ENCODE measurements at regions of chr1 and their contacts with region 1.

Region 1: DNA sequence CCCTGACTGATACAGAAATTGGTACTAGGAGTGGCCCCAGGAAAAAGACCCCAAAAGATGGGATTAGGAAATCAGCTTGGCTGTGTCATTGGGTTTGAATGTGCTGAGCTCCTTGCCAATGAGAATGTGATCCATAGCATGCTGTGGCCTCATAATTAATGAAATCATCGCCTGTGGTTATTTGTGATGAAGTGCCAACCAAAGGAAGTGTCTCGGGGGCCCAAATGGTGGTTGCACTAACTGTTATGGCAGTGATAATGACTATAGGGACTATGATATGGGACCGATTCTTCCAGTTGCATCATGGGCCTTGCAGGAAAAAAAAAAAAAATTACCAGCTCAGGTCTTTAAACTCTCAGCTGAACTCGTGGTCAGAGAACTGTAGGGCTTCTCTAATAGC is 15.4 kb upstream of the ZDHHC18 start:
- DNase-seq: no peak
- H3K4me3 Mint-ChIP-seq: no peak overlapping the region
- H3K27ac Mint-ChIP-seq: no peak overlapping the region
- H3K4me1 Mint-ChIP-seq: peaks cover 14% of the 10 kb centered on the region
- H3K27me3 Mint-ChIP-seq: no peaks in the 10 kb centered on the region

Region 2: GRCh38 chr1:26799479-26800142 is 11.4 kb before region 1 on chr1:
- CTCF ChIA-PET with region 1: interaction called, 32 read pairs
- intact Hi-C with region 1: no loop called
- DNase-seq: peak; percentile 46
- H3K4me3 Mint-ChIP-seq: no peak overlapping the region
- H3K27ac Mint-ChIP-seq: peak overlapping the region; percentile 64
- H3K4me1 Mint-ChIP-seq: peaks cover 33% of the 10 kb centered on the region
- H3K27me3 Mint-ChIP-seq: no peaks in the 10 kb centered on the region

Region 3: DNA sequence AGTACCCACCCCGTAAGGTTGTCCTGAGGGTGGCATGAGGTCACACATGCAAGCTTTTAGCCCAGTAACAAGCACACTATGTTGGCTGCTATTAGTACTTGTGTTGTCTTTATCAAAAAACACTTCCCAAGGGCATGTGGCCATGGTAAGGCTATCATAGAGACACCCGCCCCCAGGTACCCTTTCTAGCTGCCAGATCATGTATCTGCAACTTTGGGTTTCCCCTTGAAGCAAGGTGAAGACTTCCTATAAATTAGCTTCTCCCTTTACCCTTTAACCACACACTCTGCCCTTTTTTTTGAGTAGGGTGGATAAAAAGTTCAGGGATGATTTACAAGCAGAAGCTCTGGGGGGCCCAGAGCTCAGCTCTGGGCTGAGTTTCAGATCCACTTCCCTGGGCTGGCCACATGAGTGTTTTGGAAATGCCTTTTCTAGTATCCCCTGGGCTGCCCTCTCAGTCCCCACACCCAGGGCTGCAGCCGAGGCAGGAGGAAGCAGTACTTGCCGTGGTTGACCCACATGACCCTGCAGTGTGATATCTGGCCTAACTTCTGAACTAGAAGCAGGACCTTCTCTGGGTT is 17.4 kb after region 1 on chr1:
- CTCF ChIA-PET with region 1: interaction called, 13 read pairs
- intact Hi-C with region 1: loop called (anchors 1 kb)
- DNase-seq: peak; percentile 57
- H3K4me3 Mint-ChIP-seq: peak overlapping the region; percentile 87
- H3K27ac Mint-ChIP-seq: peak overlapping the region; percentile 85
- H3K4me1 Mint-ChIP-seq: peaks cover 66% of the 10 kb centered on the region
- H3K27me3 Mint-ChIP-seq: no peaks in the 10 kb centered on the region

Region 4: GRCh38 chr1:26833432-26834405 is 22.7 kb after region 1 on chr1:
- CTCF ChIA-PET with region 1: interaction called, 13 read pairs
- intact Hi-C with region 1: loop called (anchors 1 kb)
- DNase-seq: peak; percentile 96
- H3K4me3 Mint-ChIP-seq: peak overlapping the region; percentile 57
- H3K27ac Mint-ChIP-seq: peak overlapping the region; percentile 96
- H3K4me1 Mint-ChIP-seq: peaks cover 59% of the 10 kb centered on the region
- H3K27me3 Mint-ChIP-seq: no peaks in the 10 kb centered on the region

Region 5: DNA sequence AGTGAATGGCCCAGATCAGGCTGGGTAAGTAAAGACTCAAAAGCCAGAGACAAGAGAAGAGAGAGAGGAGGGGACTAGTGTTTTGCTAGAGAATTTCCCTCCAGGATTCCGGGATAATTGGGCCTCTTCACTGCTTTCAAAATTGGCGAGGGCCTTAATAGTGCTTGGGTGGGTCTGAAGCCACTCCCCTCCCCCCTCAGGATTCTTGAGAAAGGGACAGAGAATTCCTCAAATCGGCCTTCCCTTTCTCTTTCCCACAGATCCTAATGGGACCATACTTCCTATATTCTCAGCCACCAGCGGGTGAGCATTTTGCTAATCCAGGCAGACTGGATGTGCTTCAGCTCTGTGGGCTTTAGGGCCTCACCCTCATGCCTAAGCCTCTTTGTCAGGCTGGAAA is 63.8 kb after region 1 on chr1:
- CTCF ChIA-PET with region 1: interaction called, 5 read pairs
- intact Hi-C with region 1: loop called (anchors 1 kb)
- DNase-seq: no peak
- H3K4me3 Mint-ChIP-seq: no peak overlapping the region
- H3K27ac Mint-ChIP-seq: no peak overlapping the region
- H3K4me1 Mint-ChIP-seq: peaks cover 2% of the 10 kb centered on the region
- H3K27me3 Mint-ChIP-seq: no peaks in the 10 kb centered on the region

Region 6: GRCh38 chr1:26889551-26890466 is 78.8 kb after region 1 on chr1 and contains the start of gene GPN2:
- CTCF ChIA-PET with region 1: interaction called, 11 read pairs
- intact Hi-C with region 1: no loop called
- DNase-seq: peak; percentile 82
- H3K4me3 Mint-ChIP-seq: peak within 1 kb of the TSS; percentile 94
- H3K27ac Mint-ChIP-seq: peak within 1 kb of the TSS; percentile 91
- H3K4me1 Mint-ChIP-seq: peaks cover 30% of the 10 kb centered on the region
- H3K27me3 Mint-ChIP-seq: no peaks in the 10 kb centered on the region
- total RNA-seq, gene GPN2: 19.8 to 20.7 TPM

Region 7: DNA sequence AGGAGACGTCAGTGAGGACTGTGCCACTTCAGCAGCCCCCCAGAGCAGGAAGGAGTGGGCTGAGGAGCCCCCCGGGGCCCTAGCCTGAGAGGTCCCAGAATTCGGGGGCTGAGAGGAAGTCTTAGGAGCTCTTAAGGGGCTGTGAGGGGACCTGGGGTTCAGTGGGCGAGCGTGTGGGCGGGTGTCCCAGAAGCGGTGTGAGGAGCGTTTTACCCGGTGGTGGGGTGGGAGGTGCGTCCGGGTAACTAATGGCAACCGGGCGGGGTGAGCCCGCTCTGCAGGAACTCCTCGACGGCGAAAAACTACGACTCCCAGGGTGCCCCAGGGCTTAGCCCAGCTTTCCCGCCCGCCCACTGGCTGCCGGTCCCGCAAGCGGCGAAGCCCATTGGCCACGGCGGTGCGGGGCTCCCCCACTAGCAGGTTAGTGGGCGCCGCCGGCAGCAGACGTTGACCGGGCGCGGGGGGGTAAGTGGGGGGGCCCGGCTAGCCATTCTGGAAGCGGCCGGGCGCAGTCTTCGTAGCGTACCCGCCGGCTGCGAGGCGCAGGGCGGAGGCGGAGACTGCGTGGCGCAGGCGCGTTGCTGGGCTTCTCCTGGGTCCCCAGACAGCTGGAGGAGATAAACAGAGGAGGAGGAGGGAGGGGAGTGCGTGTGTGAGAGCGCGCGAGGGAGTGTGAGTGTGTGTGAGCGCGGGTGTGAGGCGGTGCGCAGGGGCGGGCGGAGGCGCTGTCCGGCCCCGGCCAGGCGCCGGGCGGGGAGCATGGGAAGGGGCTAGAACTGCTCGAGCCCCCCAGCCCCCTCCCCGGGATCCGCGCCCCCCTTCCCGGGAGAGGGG is 423.2 kb after region 1 on chr1 and contains the start of gene WDTC1:
- CTCF ChIA-PET with region 1: no interaction called
- intact Hi-C with region 1: no loop called
- DNase-seq: peak; percentile 98
- H3K4me3 Mint-ChIP-seq: peak within 1 kb of the TSS; percentile 99
- H3K27ac Mint-ChIP-seq: peak within 1 kb of the TSS; percentile 90
- H3K4me1 Mint-ChIP-seq: peaks cover 29% of the 10 kb centered on the region
- H3K27me3 Mint-ChIP-seq: no peaks in the 10 kb centered on the region
- total RNA-seq, gene WDTC1: 22.6 to 22.9 TPM